MCF 10A (cell line): ENCODE measurements at regions of chr11 and their contacts with region 1.

Region 1: GRCh38 chr11:73376160-73376802 is at the start of gene RELT:
- DNase-seq: peak; percentile 88
- H3K4me3 Mint-ChIP-seq: peak within 1 kb of the TSS; percentile 80
- H3K27ac Mint-ChIP-seq: peak within 1 kb of the TSS; percentile 29
- H3K4me1 Mint-ChIP-seq: peaks cover 18% of the 10 kb centered on the region
- H3K27me3 Mint-ChIP-seq: no peaks in the 10 kb centered on the region
- CTCF ChIP-seq: peak; percentile 90
- total RNA-seq, gene RELT: 5.8 and 8.4 TPM in 2 replicates

Region 2: GRCh38 chr11:73342633-73343032 is 33.6 kb before region 1 on chr11:
- CTCF ChIA-PET with region 1: no interaction called
- POLR2A ChIA-PET with region 1: no interaction called
- intact Hi-C with region 1: no loop called
- DNase-seq: no peak
- H3K4me3 Mint-ChIP-seq: no peak overlapping the region
- H3K27ac Mint-ChIP-seq: no peak overlapping the region
- H3K4me1 Mint-ChIP-seq: peaks cover 4% of the 10 kb centered on the region
- H3K27me3 Mint-ChIP-seq: no peaks in the 10 kb centered on the region
- CTCF ChIP-seq: no peak

Region 3: GRCh38 chr11:73360336-73361013 is 15.8 kb before region 1 on chr11:
- CTCF ChIA-PET with region 1: interaction called, 20 read pairs
- POLR2A ChIA-PET with region 1: no interaction called
- intact Hi-C with region 1: no loop called
- DNase-seq: peak; percentile 29
- H3K4me3 Mint-ChIP-seq: no peak overlapping the region
- H3K27ac Mint-ChIP-seq: no peak overlapping the region
- H3K4me1 Mint-ChIP-seq: no peaks in the 10 kb centered on the region
- H3K27me3 Mint-ChIP-seq: no peaks in the 10 kb centered on the region
- CTCF ChIP-seq: peak; percentile 40

Region 4: GRCh38 chr11:73388265-73389133 is 12.2 kb after region 1 on chr11:
- CTCF ChIA-PET with region 1: interaction called, 10 read pairs
- POLR2A ChIA-PET with region 1: interaction called, 3 read pairs
- intact Hi-C with region 1: no loop called
- DNase-seq: peak; percentile 54
- H3K4me3 Mint-ChIP-seq: peak overlapping the region; percentile 32
- H3K27ac Mint-ChIP-seq: peak overlapping the region; percentile 83
- H3K4me1 Mint-ChIP-seq: peaks cover 38% of the 10 kb centered on the region
- H3K27me3 Mint-ChIP-seq: no peaks in the 10 kb centered on the region
- CTCF ChIP-seq: no peak

Region 5: GRCh38 chr11:73429121-73429750 is 53.0 kb after region 1 on chr11:
- CTCF ChIA-PET with region 1: no interaction called
- POLR2A ChIA-PET with region 1: no interaction called
- intact Hi-C with region 1: no loop called
- DNase-seq: peak; percentile 14
- H3K4me3 Mint-ChIP-seq: no peak overlapping the region
- H3K27ac Mint-ChIP-seq: no peak overlapping the region
- H3K4me1 Mint-ChIP-seq: no peaks in the 10 kb centered on the region
- H3K27me3 Mint-ChIP-seq: no peaks in the 10 kb centered on the region
- CTCF ChIP-seq: no peak